AG04449 (cell line): ENCODE measurements at regions of chr3 and their contacts with region 1.

Region 1: DNA sequence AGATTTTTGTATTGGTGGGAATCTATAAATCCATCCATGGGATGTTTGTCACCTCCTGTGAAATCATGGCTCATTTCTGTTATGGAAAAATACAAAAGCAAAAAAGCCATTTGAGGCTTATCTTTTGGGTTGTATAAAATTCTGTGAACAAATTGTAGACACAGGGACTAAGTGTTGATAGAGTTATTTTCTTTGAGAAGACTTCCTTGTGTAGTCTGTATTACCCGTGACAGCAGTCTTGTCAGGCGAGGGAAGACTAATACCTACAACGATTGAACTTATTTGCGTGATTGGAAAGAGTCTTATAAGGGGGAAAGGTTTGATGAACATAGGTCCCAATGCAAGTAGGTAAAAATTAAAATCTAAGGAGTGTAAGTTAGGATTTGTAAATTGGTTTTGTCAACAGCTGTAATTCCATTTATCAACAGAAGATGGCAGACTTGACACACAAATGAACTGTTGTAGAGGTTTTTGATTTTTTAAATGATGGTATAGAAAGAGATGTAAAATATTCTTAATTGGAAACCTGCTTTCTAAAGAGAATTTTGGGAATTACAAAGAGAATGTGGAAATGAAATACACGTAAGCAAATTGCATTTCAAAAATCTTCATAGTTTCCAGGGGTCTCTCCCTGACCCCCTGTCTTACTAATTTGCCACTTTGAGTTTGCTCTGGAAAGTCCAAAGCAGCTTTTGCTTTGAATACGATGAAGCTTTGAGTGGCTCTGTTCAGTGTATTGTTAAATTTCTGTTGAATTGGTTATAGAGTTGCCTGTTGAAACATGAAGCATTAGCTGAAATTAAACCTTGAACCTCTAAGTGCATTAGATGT is 33.2 kb downstream of the SLC25A26 start:
- DNase-seq: no peak
- H3K4me3 ChIP-seq: no peak overlapping the region
- CTCF ChIP-seq: peak; percentile 43

Region 2: GRCh38 chr3:66267031-66267430 is 13.0 kb after region 1 on chr3:
- CTCF ChIA-PET with region 1: interaction called, 16 read pairs
- POLR2A ChIA-PET with region 1: no interaction called
- DNase-seq: no peak
- H3K4me3 ChIP-seq: no peak overlapping the region
- CTCF ChIP-seq: no peak

Region 3: GRCh38 chr3:66372681-66373350 is 118.8 kb after region 1 on chr3:
- CTCF ChIA-PET with region 1: interaction called, 12 read pairs
- POLR2A ChIA-PET with region 1: no interaction called
- DNase-seq: no peak
- H3K4me3 ChIP-seq: no peak overlapping the region
- CTCF ChIP-seq: peak; percentile 22

Region 4: GRCh38 chr3:66816090-66816761 is 562.2 kb after region 1 on chr3:
- CTCF ChIA-PET with region 1: interaction called, 223 read pairs
- POLR2A ChIA-PET with region 1: no interaction called
- DNase-seq: peak; percentile 36
- H3K4me3 ChIP-seq: no peak overlapping the region
- CTCF ChIP-seq: peak; percentile 24

Region 5: GRCh38 chr3:66836363-66837152 is 582.6 kb after region 1 on chr3:
- CTCF ChIA-PET with region 1: interaction called, 14 read pairs
- POLR2A ChIA-PET with region 1: no interaction called
- DNase-seq: no peak
- H3K4me3 ChIP-seq: no peak overlapping the region
- CTCF ChIP-seq: no peak

Region 6: GRCh38 chr3:66938338-66938963 is 684.4 kb after region 1 on chr3:
- CTCF ChIA-PET with region 1: interaction called, 13 read pairs
- POLR2A ChIA-PET with region 1: no interaction called
- DNase-seq: no peak
- H3K4me3 ChIP-seq: no peak overlapping the region
- CTCF ChIP-seq: peak; percentile 68